Endothelial cell of umbilical vein (primary cell): ENCODE measurements at regions of chr15 and their contacts with region 1.

Region 1: DNA sequence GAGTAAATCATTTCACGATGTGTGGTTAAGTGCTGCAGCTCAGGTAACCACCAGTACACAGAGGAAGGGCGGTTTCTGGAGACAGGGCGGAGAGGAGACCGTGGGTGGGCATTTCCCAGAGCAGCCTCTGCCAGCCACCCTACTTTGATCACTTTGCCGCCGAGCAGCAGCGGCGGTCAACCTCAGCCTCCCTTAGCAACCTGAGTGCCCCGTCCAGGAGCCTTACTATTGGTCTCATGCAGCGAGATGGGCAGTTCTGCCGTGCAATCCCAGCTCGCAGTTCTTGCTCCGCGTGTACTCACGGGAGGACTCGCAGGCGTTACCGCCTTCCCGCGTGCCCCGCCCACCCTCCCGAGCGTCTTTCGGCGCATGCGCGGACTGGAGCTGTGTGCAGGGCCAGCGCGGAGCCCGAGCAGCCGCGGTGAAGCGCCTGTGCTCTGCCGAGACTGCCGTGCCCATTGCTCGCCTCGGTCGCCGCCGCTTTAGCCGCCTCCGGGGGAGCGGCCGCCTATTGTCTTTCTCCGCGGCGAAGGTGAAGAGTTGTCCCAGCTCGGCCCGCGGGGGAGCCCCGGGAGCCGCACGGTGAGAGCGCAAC is at the start of gene AKAP13:
- DNase-seq: peak; percentile 99
- H3K4me3 ChIP-seq: peak within 1 kb of the TSS; percentile 57 to 79 (median 78)
- H3K27ac ChIP-seq: peak within 1 kb of the TSS; percentile 56
- H3K4me1 ChIP-seq: peaks cover 8% of the 10 kb centered on the region
- H3K27me3 ChIP-seq: no peaks in the 10 kb centered on the region
- CTCF ChIP-seq: no peak
- POLR2A ChIP-seq: peak; percentile 54
- total RNA-seq, gene AKAP13: 80.3 and 87.8 TPM in 2 replicates

Region 2: GRCh38 chr15:85394552-85395333 is 14.4 kb after region 1 on chr15:
- CTCF ChIA-PET with region 1: interaction called, 3 read pairs
- POLR2A ChIA-PET with region 1: interaction called, 3 read pairs
- dilution Hi-C with region 1: no loop called
- intact Hi-C with region 1: loop called (anchors 1 kb)
- DNase-seq: peak; percentile 69
- H3K4me3 ChIP-seq: peak overlapping the region in 1 of 3 experiments; percentile 15
- H3K27ac ChIP-seq: peak overlapping the region; percentile 3
- H3K4me1 ChIP-seq: peaks cover 21% of the 10 kb centered on the region
- H3K27me3 ChIP-seq: no peaks in the 10 kb centered on the region
- CTCF ChIP-seq: no peak
- POLR2A ChIP-seq: no peak

Region 3: GRCh38 chr15:85403745-85404144 is 23.4 kb after region 1 on chr15:
- CTCF ChIA-PET with region 1: interaction called, 7 read pairs
- POLR2A ChIA-PET with region 1: interaction called, 13 read pairs
- dilution Hi-C with region 1: no loop called
- intact Hi-C with region 1: loop called (anchors 1 kb)
- DNase-seq: no peak
- H3K4me3 ChIP-seq: no peak overlapping the region
- H3K27ac ChIP-seq: no peak overlapping the region
- H3K4me1 ChIP-seq: peaks cover 56% of the 10 kb centered on the region
- H3K27me3 ChIP-seq: no peaks in the 10 kb centered on the region
- CTCF ChIP-seq: no peak
- POLR2A ChIP-seq: no peak

Region 4: DNA sequence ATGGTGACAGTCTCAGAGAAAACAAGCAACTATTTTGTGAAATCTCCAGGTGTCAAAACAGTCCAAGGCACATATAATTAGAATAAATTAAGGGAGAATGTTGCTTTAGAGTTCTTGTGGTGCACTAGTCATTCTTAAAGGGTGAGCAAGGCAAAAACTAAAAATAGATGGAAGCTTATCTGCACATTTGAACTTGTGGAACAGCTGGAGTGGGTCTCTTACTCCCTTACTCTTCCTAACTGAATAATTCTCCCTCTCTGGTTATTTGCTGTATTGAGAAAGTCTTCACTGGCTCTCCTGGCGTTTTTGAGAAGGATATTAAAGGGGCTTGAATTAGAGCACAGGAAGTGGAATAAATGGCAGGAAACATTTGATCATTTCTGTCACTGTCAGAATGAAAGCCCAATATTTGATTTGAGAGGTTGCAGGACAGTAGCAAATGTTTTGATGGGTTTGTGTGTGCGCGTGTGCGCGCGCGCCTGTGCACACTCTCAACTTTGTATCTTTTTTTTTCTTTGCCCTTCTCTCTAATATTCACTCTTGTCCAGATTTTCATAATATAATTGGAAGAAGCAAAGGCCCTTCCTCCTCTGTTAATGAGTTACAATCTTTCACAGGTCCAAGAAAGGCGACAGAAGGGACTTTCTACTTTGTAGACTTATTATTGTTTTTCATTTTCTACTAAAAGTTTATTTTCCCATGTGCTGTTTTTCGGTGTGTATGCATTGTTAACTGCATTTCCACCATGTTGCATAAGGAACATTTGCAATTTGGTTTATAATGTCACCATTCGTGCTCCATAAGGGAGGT is 41.0 kb after region 1 on chr15:
- CTCF ChIA-PET with region 1: no interaction called
- POLR2A ChIA-PET with region 1: no interaction called
- dilution Hi-C with region 1: no loop called
- intact Hi-C with region 1: no loop called
- DNase-seq: peak; percentile 26
- H3K4me3 ChIP-seq: no peak overlapping the region
- H3K27ac ChIP-seq: no peak overlapping the region
- H3K4me1 ChIP-seq: peaks cover 12% of the 10 kb centered on the region
- H3K27me3 ChIP-seq: no peaks in the 10 kb centered on the region
- CTCF ChIP-seq: no peak
- POLR2A ChIP-seq: no peak

Region 5: GRCh38 chr15:85475317-85475701 is 95.0 kb after region 1 on chr15:
- CTCF ChIA-PET with region 1: no interaction called
- POLR2A ChIA-PET with region 1: no interaction called
- dilution Hi-C with region 1: no loop called
- intact Hi-C with region 1: loop called (anchors 2 kb)
- DNase-seq: peak; percentile 63
- H3K4me3 ChIP-seq: no peak overlapping the region
- H3K27ac ChIP-seq: no peak overlapping the region
- H3K4me1 ChIP-seq: peaks cover 40% of the 10 kb centered on the region
- H3K27me3 ChIP-seq: no peaks in the 10 kb centered on the region
- CTCF ChIP-seq: no peak
- POLR2A ChIP-seq: no peak